ENCODE measurements at regions of chr11 and their contacts with region 1.

Region 1: DNA sequence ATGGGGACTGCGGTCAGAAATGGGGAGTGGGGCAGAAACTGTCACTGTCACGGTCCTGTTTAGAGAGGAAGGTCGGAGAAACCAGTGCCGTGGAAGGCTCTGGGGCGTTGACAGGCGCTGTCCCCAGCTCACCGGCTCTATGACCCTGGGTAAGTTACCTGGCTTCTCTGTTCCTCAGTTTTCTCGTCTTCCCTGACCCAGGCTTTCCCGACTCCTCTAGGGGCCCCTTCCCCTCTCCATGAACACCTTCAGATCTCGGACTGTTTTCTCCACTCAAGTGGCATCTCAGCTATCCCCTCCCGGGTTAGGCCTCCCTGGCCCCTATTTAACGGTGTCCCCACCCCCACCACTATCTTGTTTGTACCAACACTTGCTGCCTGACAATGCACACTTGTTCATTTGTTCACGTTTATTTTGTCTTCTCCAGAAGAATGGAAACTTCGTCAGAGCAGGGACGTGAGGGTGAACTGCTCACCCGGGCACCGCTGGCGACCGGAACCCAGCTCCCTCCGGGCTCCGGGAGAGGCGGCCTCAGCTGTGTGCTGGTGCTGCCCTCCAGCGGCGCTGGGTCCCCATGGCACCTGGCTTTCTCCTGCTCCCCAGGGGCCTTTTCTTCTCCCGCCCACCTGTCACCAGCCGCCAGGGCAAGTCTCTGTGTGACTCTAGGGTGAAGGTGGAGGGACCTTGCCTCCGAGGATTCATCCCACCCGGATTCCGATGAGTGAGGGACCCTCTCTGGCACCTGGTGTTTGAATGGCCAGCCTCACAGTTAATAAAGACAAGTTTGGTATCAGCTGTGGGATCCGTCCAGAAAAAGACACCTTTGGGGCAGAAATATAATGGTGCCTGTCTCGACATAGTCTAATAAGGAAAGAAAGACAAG is 33.1 kb upstream of the SLC35C1 start:
- DNase-seq: peak; percentile 78
- H3K4me3 ChIP-seq: peak overlapping the region; percentile 39 to 54 (median 50)
- H3K27ac ChIP-seq: no peak overlapping the region
- H3K4me1 ChIP-seq: peaks cover 5% of the 10 kb centered on the region
- H3K27me3 ChIP-seq: peaks cover 0 to 1% of the 10 kb centered on the region in 2 experiments
- CTCF ChIP-seq: peak; percentile 95 to 98
- POLR2A ChIP-seq: no peak

Region 2: GRCh38 chr11:45110562-45110961 is 661.2 kb before region 1 on chr11:
- CTCF ChIA-PET with region 1: interaction called, 27 read pairs
- POLR2A ChIA-PET with region 1: no interaction called
- dilution Hi-C with region 1: no loop called
- intact Hi-C with region 1: loop called (anchors 5 kb)
- DNase-seq: peak; percentile 64
- H3K4me3 ChIP-seq: no peak overlapping the region
- H3K27ac ChIP-seq: no peak overlapping the region
- H3K4me1 ChIP-seq: no peaks in the 10 kb centered on the region
- H3K27me3 ChIP-seq: peaks cover 6 to 7% of the 10 kb centered on the region in 2 experiments
- CTCF ChIP-seq: peak; percentile 52 to 68
- POLR2A ChIP-seq: no peak

Region 3: DNA sequence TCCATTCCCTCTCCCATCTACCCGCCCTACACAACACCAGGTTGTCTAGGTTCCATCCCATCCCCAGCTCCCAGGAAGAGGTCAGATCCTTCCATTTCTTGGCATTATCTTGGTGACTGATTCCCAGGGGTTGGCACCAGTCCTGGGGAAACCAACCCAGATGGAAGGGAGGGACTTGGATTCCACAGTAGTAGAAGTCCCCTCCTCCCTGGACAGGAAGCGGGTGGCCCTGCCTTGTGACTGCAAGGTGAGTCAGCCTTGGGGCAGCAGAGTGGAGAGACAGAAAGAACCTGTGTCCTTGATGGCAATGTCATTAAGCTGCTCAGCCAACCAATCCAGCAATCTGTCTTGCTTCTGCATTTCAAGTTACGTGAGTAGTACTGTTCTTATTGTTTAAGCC is 512.2 kb before region 1 on chr11:
- CTCF ChIA-PET with region 1: no interaction called
- POLR2A ChIA-PET with region 1: no interaction called
- dilution Hi-C with region 1: no loop called
- intact Hi-C with region 1: no loop called
- DNase-seq: no peak
- H3K4me3 ChIP-seq: no peak overlapping the region
- H3K27ac ChIP-seq: no peak overlapping the region
- H3K4me1 ChIP-seq: no peaks in the 10 kb centered on the region
- H3K27me3 ChIP-seq: no peaks in the 10 kb centered on the region
- CTCF ChIP-seq: no peak
- POLR2A ChIP-seq: no peak

Region 4: DNA sequence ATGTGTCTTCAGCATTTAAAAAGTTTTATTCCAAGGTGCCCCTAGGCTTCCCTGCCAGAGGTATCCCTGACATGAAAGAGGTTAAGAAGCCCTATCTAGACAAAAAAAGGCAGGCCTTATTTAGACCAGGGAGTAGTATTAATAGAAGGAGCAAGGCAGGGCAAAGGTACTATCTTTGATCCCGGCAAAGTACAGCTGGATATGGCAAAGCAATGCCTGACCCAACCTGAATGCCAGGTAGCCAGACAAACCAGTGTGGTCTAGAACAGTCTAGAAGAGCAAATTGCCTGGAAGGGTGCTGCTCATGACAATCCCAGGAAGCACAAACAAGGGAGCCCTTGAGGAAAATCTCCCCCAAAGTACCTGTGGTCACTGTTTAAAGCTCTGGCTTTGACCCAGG is 423.1 kb before region 1 on chr11:
- CTCF ChIA-PET with region 1: interaction called, 195 read pairs
- POLR2A ChIA-PET with region 1: no interaction called
- dilution Hi-C with region 1: no loop called
- intact Hi-C with region 1: no loop called
- DNase-seq: no peak
- H3K4me3 ChIP-seq: no peak overlapping the region
- H3K27ac ChIP-seq: no peak overlapping the region
- H3K4me1 ChIP-seq: no peaks in the 10 kb centered on the region
- H3K27me3 ChIP-seq: peaks cover 12 to 24% of the 10 kb centered on the region in 2 experiments
- CTCF ChIP-seq: no peak
- POLR2A ChIP-seq: no peak

Region 5: GRCh38 chr11:45400591-45400990 is 371.2 kb before region 1 on chr11:
- CTCF ChIA-PET with region 1: interaction called, 47 read pairs
- POLR2A ChIA-PET with region 1: no interaction called
- dilution Hi-C with region 1: no loop called
- intact Hi-C with region 1: no loop called
- DNase-seq: peak; percentile 41
- H3K4me3 ChIP-seq: no peak overlapping the region
- H3K27ac ChIP-seq: peak overlapping the region; percentile 60
- H3K4me1 ChIP-seq: peaks cover 17% of the 10 kb centered on the region
- H3K27me3 ChIP-seq: no peaks in the 10 kb centered on the region
- CTCF ChIP-seq: no peak
- POLR2A ChIP-seq: no peak

Region 6: GRCh38 chr11:45646275-45646970 is 125.4 kb before region 1 on chr11:
- CTCF ChIA-PET with region 1: interaction called, 7 read pairs
- POLR2A ChIA-PET with region 1: no interaction called
- dilution Hi-C with region 1: no loop called
- intact Hi-C with region 1: loop called (anchors 5 kb)
- DNase-seq: peak; percentile 60
- H3K4me3 ChIP-seq: no peak overlapping the region
- H3K27ac ChIP-seq: no peak overlapping the region
- H3K4me1 ChIP-seq: peaks cover 51% of the 10 kb centered on the region
- H3K27me3 ChIP-seq: no peaks in the 10 kb centered on the region
- CTCF ChIP-seq: no peak
- POLR2A ChIP-seq: no peak

Region 7: DNA sequence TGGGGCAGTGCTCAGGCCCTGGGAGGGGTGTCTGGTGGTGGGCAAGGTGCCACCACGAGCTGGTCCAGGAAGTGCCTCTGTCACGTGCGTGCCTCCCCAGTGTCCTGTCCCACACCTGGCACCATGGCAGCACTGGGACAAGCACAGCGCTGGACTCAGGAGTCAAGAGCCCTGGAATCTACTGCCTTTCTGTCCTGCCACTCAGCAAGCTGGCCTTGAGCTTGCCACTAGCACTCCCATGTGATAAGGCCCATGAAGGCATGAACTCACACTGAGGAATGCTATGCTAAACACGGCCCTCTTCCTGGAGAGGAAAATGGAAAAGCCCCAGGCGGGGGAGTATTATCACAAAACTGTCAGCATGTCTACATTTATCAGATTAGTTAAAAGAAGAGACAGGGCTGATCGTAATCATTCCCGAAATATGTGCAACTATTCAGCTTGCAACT is 17.5 kb before region 1 on chr11:
- CTCF ChIA-PET with region 1: interaction called, 44 read pairs
- POLR2A ChIA-PET with region 1: no interaction called
- dilution Hi-C with region 1: no loop called
- intact Hi-C with region 1: no loop called
- DNase-seq: no peak
- H3K4me3 ChIP-seq: no peak overlapping the region
- H3K27ac ChIP-seq: no peak overlapping the region
- H3K4me1 ChIP-seq: no peaks in the 10 kb centered on the region
- H3K27me3 ChIP-seq: peaks cover 4 to 12% of the 10 kb centered on the region in 2 experiments
- CTCF ChIP-seq: no peak
- POLR2A ChIP-seq: no peak

Region 8: DNA sequence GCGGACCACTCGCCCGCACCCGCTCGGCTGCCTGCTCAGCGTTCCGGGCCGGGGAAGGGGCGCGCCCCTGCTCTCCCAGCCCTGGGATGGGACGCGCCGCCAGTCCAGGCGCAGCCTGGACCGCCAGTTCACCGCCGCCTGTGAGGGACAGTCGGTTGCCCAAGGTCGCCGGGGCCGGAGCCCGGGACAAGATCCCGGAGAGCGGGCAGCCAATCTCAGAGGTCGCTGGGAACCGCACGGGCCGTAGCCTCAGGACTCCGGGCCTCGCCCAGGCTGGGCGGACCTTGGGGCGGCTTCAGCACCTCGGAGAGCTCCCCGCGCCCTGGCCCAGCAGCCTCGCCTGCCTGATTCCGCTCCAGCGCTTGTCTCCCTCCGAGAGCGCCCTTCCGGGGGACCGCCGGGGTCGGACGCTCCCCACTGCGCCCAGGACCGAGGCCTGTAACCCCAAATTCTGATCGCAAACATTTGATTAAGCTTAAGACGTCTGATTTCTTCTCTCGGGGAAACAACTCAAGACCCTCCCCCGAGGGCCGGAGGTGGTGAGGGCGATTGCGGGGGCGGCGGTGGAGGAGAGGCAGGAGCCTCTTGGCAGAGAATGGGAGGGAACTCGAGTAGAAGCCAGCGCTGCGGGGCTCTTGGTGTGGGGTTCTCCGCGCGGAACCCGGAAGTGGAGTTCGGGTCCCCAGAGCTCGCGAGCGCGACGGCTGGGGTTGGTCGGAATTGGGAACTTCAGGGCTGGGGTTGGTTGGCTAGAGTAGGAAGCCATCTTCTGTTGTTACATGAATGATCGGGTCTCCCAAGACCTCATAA is 620.8 kb after region 1 on chr11:
- CTCF ChIA-PET with region 1: no interaction called
- POLR2A ChIA-PET with region 1: no interaction called
- dilution Hi-C with region 1: no loop called
- intact Hi-C with region 1: no loop called
- DNase-seq: peak; percentile 71
- H3K4me3 ChIP-seq: peak overlapping the region in 1 of 3 experiments; percentile 36
- H3K27ac ChIP-seq: no peak overlapping the region
- H3K4me1 ChIP-seq: peaks cover 3% of the 10 kb centered on the region
- H3K27me3 ChIP-seq: peaks cover 21 to 34% of the 10 kb centered on the region in 2 experiments
- CTCF ChIP-seq: no peak
- POLR2A ChIP-seq: no peak